Activated naive CD8-positive, alpha-beta T cell treated with anti-CD3 and anti-CD28 coated beads, Interleukin-2, amount 10 ng/mL, durations not matched to agents 7 days and 5 days (primary cell): ENCODE measurements at regions of chr14 and their contacts with region 1.

Region 1: GRCh38 chr14:24605435-24606190 is 3.9 kb downstream of the GZMH start:
- DNase-seq: peak; percentile 78
- ATAC-seq: peak; percentile 80
- H3K4me3 Mint-ChIP-seq: peak overlapping the region; percentile 81
- H3K27ac Mint-ChIP-seq: peak overlapping the region; percentile 97
- H3K4me1 Mint-ChIP-seq: peaks cover 54% of the 10 kb centered on the region
- H3K27me3 Mint-ChIP-seq: no peaks in the 10 kb centered on the region

Region 2: DNA sequence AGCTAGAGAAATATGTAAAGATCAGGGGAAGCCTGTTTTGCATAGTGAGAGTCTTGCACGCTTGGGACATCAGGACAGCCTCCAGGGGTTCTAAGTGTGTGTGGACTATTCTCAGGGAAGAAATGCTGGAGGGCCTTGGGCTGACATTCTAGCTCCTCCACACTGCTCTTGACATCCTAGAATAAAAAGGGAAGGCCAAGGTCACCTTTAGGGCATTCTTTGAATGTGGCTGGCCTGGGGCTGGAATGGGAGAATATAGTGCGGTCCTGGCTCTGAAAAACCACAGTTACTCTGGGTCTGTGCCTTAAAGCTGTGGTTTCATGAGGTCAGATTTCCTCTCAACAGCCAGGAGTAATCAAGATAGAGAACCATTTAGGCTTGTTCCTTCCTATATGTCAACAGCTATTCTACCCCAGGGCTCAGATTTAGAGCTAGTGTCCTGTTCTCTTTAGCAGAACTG is 121.8 kb before region 1 on chr14:
- POLR2A ChIA-PET with region 1: interaction called, 10 read pairs
- DNase-seq: no peak
- ATAC-seq: peak; percentile 77
- H3K4me3 Mint-ChIP-seq: peak overlapping the region; percentile 56
- H3K27ac Mint-ChIP-seq: peak overlapping the region; percentile 76
- H3K4me1 Mint-ChIP-seq: peaks cover 27% of the 10 kb centered on the region
- H3K27me3 Mint-ChIP-seq: no peaks in the 10 kb centered on the region

Region 3: GRCh38 chr14:24673534-24674203 is 68.1 kb after region 1 on chr14:
- POLR2A ChIA-PET with region 1: interaction called, 31 read pairs
- DNase-seq: peak; percentile 56
- ATAC-seq: peak; percentile 75
- H3K4me3 Mint-ChIP-seq: peak overlapping the region; percentile 81
- H3K27ac Mint-ChIP-seq: peak overlapping the region; percentile 100
- H3K4me1 Mint-ChIP-seq: peaks cover 68% of the 10 kb centered on the region
- H3K27me3 Mint-ChIP-seq: no peaks in the 10 kb centered on the region